K562 (cell line): ENCODE measurements at regions of chr1 and their contacts with region 1.

Region 1: GRCh38 chr1:40612345-40612831 is 53.1 kb downstream of the RIMS3 start:
- DNase-seq: peak; percentile 74 to 83 (median 79)
- ATAC-seq: peak; percentile 99
- H3K4me3 ChIP-seq: no peak overlapping the region
- H3K27ac ChIP-seq: no peak overlapping the region
- H3K4me1 ChIP-seq: peaks cover 0 to 4% of the 10 kb centered on the region in 2 experiments; a peak in 2 of 5 replicates
- H3K27me3 ChIP-seq: peaks cover 0 to 14% of the 10 kb centered on the region in 2 experiments; a peak in 3 of 5 replicates
- CTCF ChIP-seq: peak; percentile 92 to 96 (median 94)
- EP300 ChIP-seq: no peak
- POLR2A ChIP-seq: no peak
- RAD21 ChIP-seq: peak; percentile 90 to 97

Region 2: GRCh38 chr1:40625066-40625465 is 12.7 kb after region 1 on chr1:
- CTCF ChIA-PET with region 1: no interaction called
- POLR2A ChIA-PET with region 1: no interaction called
- in situ Hi-C with region 1: no loop called
- intact Hi-C with region 1: no loop called
- DNase-seq: no peak
- ATAC-seq: peak; percentile 42
- H3K4me3 ChIP-seq: no peak overlapping the region
- H3K27ac ChIP-seq: no peak overlapping the region
- H3K4me1 ChIP-seq: peaks cover 0 to 5% of the 10 kb centered on the region in 2 experiments; a peak in 3 of 5 replicates
- H3K27me3 ChIP-seq: peaks cover 22 to 70% of the 10 kb centered on the region in 2 experiments
- CTCF ChIP-seq: peak; percentile 17 to 42 (median 19); a peak in 2 of 6 replicates
- EP300 ChIP-seq: no peak
- POLR2A ChIP-seq: no peak
- RAD21 ChIP-seq: peak in 1 of 2 experiments; percentile 29; a peak in 2 of 4 replicates

Region 3: DNA sequence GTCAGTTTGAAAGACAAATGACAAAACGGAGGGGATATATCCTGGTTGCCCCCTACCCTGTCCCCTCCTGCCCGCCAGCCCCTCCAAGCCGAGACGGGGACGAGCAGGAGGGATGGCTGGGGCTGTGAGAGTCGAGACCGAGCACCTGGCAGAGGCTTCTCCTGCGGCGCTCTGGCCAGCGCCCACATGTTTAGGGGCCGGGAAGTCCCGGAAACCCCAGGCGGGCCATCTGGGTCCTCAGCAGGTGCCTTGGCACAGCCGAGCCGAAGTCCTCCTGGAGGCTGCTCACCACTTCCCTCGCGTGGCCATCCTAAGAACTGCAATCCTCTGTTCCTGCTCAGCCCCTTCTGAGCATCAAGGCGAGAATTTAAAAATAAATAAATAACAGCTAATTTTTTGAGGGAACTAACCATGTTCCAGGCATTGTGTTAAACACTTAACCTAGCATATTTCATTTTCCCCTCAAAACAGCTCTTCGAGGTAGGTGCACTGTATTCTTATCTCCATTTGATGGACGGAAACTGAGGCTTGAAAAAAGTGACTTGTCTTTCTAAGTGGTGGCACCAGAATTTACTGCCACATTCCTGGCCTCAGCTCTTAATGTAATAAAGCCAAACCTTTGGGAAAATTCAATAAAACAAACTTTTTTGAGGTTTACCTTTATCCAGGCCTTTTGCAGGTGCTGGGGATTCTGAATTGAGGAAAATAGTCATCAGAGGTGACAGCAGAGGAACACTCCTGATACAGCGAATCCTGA is 56.6 kb after region 1 on chr1:
- CTCF ChIA-PET with region 1: interaction called, 23 read pairs
- POLR2A ChIA-PET with region 1: no interaction called
- in situ Hi-C with region 1: no loop called
- intact Hi-C with region 1: loop called (anchors 1 kb)
- DNase-seq: peak; percentile 79 to 86 (median 84)
- ATAC-seq: peak; percentile 67
- H3K4me3 ChIP-seq: no peak overlapping the region
- H3K27ac ChIP-seq: no peak overlapping the region
- H3K4me1 ChIP-seq: peaks cover 4 to 11% of the 10 kb centered on the region in 2 experiments; a peak in 2 of 5 replicates
- H3K27me3 ChIP-seq: peaks cover 0 to 19% of the 10 kb centered on the region in 2 experiments; a peak in 3 of 5 replicates
- CTCF ChIP-seq: peak; percentile 94 to 97 (median 96)
- EP300 ChIP-seq: no peak
- POLR2A ChIP-seq: no peak
- RAD21 ChIP-seq: peak; percentile 78 to 89

Region 4: GRCh38 chr1:40774266-40774998 is 162.0 kb after region 1 on chr1:
- CTCF ChIA-PET with region 1: interaction called, 3 read pairs
- POLR2A ChIA-PET with region 1: no interaction called
- in situ Hi-C with region 1: no loop called
- intact Hi-C with region 1: loop called (anchors 1 kb)
- DNase-seq: peak; percentile 77 to 87 (median 82)
- ATAC-seq: peak; percentile 96
- H3K4me3 ChIP-seq: no peak overlapping the region
- H3K27ac ChIP-seq: peak overlapping the region; percentile 49
- H3K4me1 ChIP-seq: peaks cover 0 to 14% of the 10 kb centered on the region in 2 experiments; a peak in 4 of 5 replicates
- H3K27me3 ChIP-seq: no peaks in the 10 kb centered on the region
- CTCF ChIP-seq: peak; percentile 93 to 98 (median 94)
- EP300 ChIP-seq: peak; percentile 51; the same call in 1 of the 2 replicates
- POLR2A ChIP-seq: no peak
- RAD21 ChIP-seq: peak; percentile 90 to 94